SK-N-SH (cell line): ENCODE measurements at regions of chr19 and their contacts with region 1.

Region 1: DNA sequence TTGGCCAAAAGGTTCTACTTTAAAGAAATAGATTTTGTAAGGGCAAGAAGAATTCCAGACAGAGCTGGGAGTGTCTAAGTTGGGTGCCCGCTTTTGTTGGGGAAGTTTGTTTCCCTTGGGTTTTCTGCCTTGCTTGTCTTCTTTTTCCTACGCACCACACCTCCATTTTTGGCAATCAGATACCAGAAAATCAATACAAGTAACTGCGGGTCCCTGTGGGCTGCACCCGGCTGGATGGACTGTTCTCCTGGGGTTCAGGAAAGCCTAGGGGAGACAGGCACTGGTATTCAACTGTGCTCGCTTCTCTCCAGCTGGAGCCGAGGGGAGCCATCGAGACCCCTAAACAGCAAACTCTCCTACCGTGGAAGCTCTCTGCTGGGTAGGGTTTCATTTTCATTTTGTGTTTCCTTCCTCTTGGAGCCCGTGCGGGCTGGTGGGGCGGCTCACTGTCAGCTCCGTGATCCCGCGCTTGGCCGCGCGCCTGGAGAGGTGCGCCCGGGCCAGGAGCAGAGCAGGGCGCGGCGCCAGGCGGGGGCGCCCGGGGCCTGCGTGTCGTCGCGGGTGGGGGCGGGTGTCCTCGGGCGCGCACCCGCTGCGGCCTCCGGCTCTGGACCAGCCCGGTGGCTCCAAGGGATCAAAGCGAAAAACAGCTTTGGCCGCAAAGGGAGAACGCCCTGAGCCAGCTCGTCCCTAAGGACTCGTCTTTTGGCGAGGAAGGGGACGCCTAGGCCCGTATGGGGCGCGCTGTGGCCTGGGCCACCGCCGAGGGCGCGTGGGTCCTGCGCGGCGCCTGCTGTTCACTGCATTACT is 347.2 kb downstream of the ZNF536 start:
- DNase-seq: peak; percentile 90
- H3K4me3 ChIP-seq: peak overlapping the region; percentile 38 to 60
- H3K27ac ChIP-seq: peak overlapping the region in 1 of 2 experiments; percentile 93; a peak in 2 of 4 replicates
- H3K4me1 ChIP-seq: peaks cover 0 to 20% of the 10 kb centered on the region in 2 experiments; a peak in 2 of 4 replicates
- H3K27me3 ChIP-seq: no peaks in the 10 kb centered on the region
- CTCF ChIP-seq: no peak
- EP300 ChIP-seq: 0 out of 4 replicates have a peak, but pooled peaks of 1 of the 2 experiments have one; percentile 3
- RAD21 ChIP-seq: peak; percentile 60

Region 2: DNA sequence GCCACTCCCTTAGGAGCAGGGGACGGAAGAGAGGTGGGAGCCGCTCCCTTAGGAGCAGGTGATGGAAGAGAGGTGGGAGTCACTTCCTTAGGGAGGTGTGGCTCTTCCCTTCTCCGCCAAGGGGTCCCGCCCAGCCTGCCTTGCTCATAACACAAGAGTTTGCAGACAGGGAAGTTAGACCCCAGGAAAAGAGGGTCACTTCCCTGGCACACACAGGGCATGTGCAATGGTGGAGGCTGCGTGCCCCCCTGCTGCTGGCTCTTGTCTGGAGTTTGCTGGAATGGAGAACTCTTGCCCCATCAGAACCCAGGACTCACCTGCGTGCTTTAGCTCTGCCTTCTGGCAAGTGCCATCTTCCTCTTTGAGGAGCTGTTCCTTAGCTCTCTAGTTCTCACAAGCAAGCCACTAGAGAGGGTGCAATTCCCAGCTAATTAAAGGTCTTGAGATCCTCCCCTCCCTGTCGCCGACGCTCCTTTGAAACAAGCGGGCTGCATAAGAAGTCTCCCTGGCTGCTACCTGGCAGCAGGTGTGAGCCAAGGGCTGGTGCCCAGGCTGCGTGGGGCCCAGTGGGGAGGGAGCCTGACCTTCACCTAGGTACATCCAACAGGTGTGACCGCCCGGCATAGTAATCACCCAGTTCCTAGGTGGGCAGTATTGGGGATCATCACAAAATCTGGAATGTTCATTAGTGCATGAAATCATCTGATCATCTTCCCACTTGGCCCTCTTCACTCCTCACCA is 65.6 kb before region 1 on chr19:
- CTCF ChIA-PET with region 1: no interaction called
- POLR2A ChIA-PET with region 1: no interaction called
- DNase-seq: no peak
- H3K4me3 ChIP-seq: no peak overlapping the region
- H3K27ac ChIP-seq: no peak overlapping the region
- H3K4me1 ChIP-seq: peaks cover 0 to 8% of the 10 kb centered on the region in 2 experiments; a peak in 2 of 4 replicates
- H3K27me3 ChIP-seq: no peaks in the 10 kb centered on the region
- CTCF ChIP-seq: no peak
- EP300 ChIP-seq: no peak
- RAD21 ChIP-seq: no peak

Region 3: GRCh38 chr19:30669329-30670010 is 49.9 kb before region 1 on chr19:
- CTCF ChIA-PET with region 1: interaction called, 16 read pairs
- POLR2A ChIA-PET with region 1: no interaction called
- DNase-seq: peak; percentile 83
- H3K4me3 ChIP-seq: no peak overlapping the region; a peak in 2 of 4 replicates
- H3K27ac ChIP-seq: no peak overlapping the region
- H3K4me1 ChIP-seq: peaks cover 0 to 5% of the 10 kb centered on the region in 2 experiments; a peak in 1 of 4 replicates
- H3K27me3 ChIP-seq: no peaks in the 10 kb centered on the region
- CTCF ChIP-seq: peak; percentile 84
- EP300 ChIP-seq: no peak
- RAD21 ChIP-seq: peak; percentile 83

Region 4: DNA sequence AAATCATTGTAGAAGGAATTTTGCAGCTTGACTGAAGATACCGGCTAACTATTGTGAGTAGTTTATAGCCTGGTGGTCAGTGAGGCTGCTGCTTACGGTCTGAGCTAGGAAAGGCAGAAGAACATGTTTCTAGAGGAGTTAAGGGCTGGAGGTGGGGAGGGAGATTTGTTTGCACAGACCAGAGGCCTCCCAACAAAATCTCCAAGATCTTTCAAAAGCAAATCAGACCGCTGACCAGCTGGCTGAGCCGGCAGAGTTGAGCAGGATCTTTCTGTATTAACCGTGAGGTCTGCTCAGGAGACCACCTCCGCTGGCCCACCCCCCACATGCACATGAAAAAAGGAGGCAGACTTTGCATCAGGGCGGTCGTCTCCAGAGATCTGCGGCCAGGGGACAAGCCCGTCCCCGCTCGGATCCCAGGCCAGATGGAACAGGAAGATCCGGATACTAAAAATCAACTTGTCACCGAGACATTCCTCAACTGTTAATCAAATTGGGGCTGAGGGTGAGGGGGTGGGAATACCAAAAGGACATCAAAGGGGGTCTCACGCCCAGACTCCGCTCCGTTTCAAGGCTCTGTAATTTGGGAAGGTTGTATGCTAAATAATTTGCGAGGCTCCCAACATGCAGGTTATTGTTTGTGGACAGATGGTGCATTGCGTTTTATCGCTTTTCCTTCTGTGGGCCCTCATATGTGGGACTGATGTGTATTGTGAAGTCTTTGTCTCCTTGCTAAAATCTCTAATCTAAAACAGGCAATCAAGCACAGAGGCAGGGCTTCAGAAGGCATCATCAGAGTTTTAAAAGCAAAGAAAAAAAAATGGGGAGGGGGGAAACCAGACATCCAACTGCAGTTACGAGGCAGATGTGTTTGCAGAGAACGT is 28.2 kb before region 1 on chr19:
- CTCF ChIA-PET with region 1: interaction called, 20 read pairs
- POLR2A ChIA-PET with region 1: interaction called, 4 read pairs
- DNase-seq: peak; percentile 44
- H3K4me3 ChIP-seq: peak overlapping the region; percentile 14 to 33; a peak in 3 of 4 replicates
- H3K27ac ChIP-seq: peak overlapping the region in 1 of 2 experiments; percentile 99; a peak in 2 of 4 replicates
- H3K4me1 ChIP-seq: peaks cover 5 to 84% of the 10 kb centered on the region in 2 experiments; a peak in 3 of 4 replicates
- H3K27me3 ChIP-seq: no peaks in the 10 kb centered on the region; the same call in 1 of the 2 replicates
- CTCF ChIP-seq: no peak
- EP300 ChIP-seq: no peak; a peak in 1 of 4 replicates
- RAD21 ChIP-seq: no peak

Region 5: DNA sequence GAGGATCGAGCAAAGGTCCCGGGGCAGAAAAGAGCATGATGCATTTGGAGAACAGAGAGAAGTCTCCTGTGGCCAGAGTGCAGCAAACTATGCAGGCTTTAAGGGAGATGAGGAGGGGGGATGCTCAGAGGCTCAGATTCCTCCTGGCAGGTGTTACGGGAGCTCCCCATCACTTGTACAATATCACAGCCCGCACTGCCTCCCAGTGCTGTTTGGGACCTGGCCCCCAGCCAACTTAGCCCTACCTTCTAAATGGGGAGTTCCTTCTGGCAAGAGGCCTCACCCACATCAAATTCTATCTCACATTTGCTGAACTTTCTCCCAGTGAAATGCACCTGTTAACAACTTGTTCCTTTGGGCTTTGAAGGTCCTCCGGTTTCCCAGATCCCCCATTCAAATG is 16.2 kb before region 1 on chr19:
- CTCF ChIA-PET with region 1: interaction called, 14 read pairs
- POLR2A ChIA-PET with region 1: interaction called, 3 read pairs
- DNase-seq: no peak
- H3K4me3 ChIP-seq: no peak overlapping the region
- H3K27ac ChIP-seq: no peak overlapping the region
- H3K4me1 ChIP-seq: no peaks in the 10 kb centered on the region
- H3K27me3 ChIP-seq: no peaks in the 10 kb centered on the region
- CTCF ChIP-seq: no peak
- EP300 ChIP-seq: no peak
- RAD21 ChIP-seq: no peak

Region 6: DNA sequence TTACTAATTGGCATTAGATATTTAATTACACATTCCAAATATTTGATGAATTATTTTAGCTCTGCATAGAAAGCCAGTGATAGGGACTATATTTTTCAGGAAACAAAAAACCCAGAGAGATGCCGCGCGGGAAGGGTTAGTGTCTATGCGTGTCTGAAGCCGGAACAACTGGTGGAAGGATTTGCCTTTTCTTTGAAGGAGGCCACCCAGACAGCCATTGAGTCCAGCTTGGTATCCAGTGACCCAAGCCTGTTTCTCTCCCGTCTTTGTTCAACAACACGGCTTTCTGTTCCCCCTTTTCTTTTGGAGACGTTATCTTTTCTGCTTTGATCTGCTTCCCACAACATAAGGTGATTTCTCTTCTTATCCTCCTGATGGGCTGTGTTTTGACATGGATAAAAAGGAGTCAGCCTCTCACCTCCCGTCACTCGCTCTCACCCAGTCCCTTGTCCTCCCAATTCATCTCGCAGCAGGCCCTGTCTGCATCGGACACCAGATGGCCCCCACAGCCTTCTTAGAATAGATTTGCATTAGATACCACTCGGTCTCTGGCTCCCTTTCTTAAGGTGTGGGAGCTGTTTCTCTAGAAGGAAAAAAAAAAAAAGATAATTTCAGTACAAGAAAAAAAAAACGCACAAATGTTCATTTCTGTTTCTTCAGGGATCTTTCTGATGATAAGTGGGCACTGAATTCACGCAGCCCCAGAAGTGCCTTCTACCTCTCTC is 14.6 kb after region 1 on chr19:
- CTCF ChIA-PET with region 1: interaction called, 35 read pairs
- POLR2A ChIA-PET with region 1: interaction called, 8 read pairs
- DNase-seq: peak; percentile 67
- H3K4me3 ChIP-seq: no peak overlapping the region
- H3K27ac ChIP-seq: peak overlapping the region in 1 of 2 experiments; percentile 47; a peak in 1 of 4 replicates
- H3K4me1 ChIP-seq: peaks cover 0 to 29% of the 10 kb centered on the region in 2 experiments; a peak in 1 of 4 replicates
- H3K27me3 ChIP-seq: no peaks in the 10 kb centered on the region
- CTCF ChIP-seq: no peak
- EP300 ChIP-seq: no peak
- RAD21 ChIP-seq: peak; percentile 77

Region 7: GRCh38 chr19:30739394-30739793 is 20.0 kb after region 1 on chr19:
- CTCF ChIA-PET with region 1: interaction called, 35 read pairs
- POLR2A ChIA-PET with region 1: interaction called, 12 read pairs
- DNase-seq: peak; percentile 62
- H3K4me3 ChIP-seq: no peak overlapping the region
- H3K27ac ChIP-seq: peak overlapping the region in 1 of 2 experiments; percentile 99; a peak in 2 of 4 replicates
- H3K4me1 ChIP-seq: peaks cover 0 to 68% of the 10 kb centered on the region in 2 experiments; a peak in 2 of 4 replicates
- H3K27me3 ChIP-seq: no peaks in the 10 kb centered on the region
- CTCF ChIP-seq: no peak
- EP300 ChIP-seq: peak in 1 of 2 experiments; percentile 85; a peak in 2 of 4 replicates
- RAD21 ChIP-seq: peak; percentile 18; the same call in 1 of the 2 replicates

Region 8: GRCh38 chr19:31338069-31338776 is 618.8 kb after region 1 on chr19:
- CTCF ChIA-PET with region 1: interaction called, 7 read pairs
- POLR2A ChIA-PET with region 1: interaction called, 12 read pairs
- DNase-seq: peak; percentile 80
- H3K4me3 ChIP-seq: no peak overlapping the region; a peak in 1 of 4 replicates
- H3K27ac ChIP-seq: peak overlapping the region in 1 of 2 experiments; percentile 98; a peak in 2 of 4 replicates
- H3K4me1 ChIP-seq: peaks cover 42 to 67% of the 10 kb centered on the region in 2 experiments
- H3K27me3 ChIP-seq: no peaks in the 10 kb centered on the region
- CTCF ChIP-seq: peak; percentile 60
- EP300 ChIP-seq: peak in 1 of 2 experiments; percentile 69; a peak in 1 of 4 replicates
- RAD21 ChIP-seq: peak; percentile 73